ENCODE measurements at regions of chr13 and their contacts with region 1.

Region 1: GRCh38 chr13:41668130-41668757 is 210.9 kb downstream of the RGCC start:
- DNase-seq: peak; percentile 85
- H3K4me3 ChIP-seq: no peak overlapping the region
- H3K27ac ChIP-seq: no peak overlapping the region
- H3K27me3 ChIP-seq: no peaks in the 10 kb centered on the region
- CTCF ChIP-seq: peak; percentile 85

Region 2: DNA sequence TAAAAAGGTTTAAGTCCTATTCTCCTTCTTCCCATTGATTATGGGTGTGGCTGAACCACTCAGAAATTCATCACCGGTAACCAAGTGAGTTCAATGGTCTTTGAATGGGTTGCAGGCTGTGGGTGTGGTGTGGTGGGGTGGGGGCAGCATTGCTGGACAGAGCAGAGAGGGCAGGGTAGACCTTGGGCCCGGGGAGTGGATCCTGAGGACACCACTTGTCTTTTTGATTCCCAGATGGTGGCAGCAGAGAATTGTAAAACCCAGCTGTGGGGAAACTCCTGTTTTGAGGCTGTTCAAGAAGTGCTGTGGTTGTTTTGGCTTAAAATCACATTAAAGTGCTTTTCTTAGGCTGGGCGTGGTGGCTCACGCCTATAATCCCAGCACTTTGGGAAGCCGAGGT is 256.7 kb before region 1 on chr13:
- CTCF ChIA-PET with region 1: interaction called, 12 read pairs
- POLR2A ChIA-PET with region 1: no interaction called
- DNase-seq: peak; percentile 16
- H3K4me3 ChIP-seq: no peak overlapping the region
- H3K27ac ChIP-seq: no peak overlapping the region
- H3K27me3 ChIP-seq: no peaks in the 10 kb centered on the region
- CTCF ChIP-seq: peak; percentile 48

Region 3: DNA sequence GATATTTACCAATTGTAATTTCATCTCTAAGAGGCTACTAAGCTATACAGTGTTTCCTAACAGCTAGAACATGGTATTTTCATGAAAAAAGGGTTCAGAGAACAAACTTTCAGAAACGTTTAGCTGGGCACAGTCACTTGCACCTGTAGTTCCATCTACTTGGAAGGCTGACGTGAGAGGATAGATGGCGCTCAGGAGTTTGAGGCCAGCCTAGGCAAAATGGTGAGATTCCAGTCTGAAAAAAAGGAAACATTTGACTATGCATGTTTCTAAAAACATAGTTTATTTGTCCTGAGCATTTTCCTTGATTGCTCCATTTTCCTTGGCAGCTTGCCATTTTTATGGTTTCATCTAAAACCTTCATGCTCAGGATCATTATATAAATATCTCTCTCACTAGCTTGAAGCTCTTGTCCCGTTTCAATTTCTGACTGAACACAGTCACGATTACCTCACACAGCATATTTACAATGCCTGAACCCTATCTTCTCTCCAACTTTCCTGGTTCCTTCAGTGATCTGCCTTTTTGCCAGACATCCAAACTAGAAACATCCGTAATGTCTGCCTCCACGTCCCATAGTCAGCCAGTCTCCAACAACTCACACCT is 10.1 kb before region 1 on chr13:
- CTCF ChIA-PET with region 1: interaction called, 17 read pairs
- POLR2A ChIA-PET with region 1: no interaction called
- DNase-seq: peak; percentile 74
- H3K4me3 ChIP-seq: no peak overlapping the region
- H3K27ac ChIP-seq: peak overlapping the region; percentile 77
- H3K27me3 ChIP-seq: no peaks in the 10 kb centered on the region
- CTCF ChIP-seq: peak; percentile 30; the same call in 1 of the 2 replicates

Region 4: DNA sequence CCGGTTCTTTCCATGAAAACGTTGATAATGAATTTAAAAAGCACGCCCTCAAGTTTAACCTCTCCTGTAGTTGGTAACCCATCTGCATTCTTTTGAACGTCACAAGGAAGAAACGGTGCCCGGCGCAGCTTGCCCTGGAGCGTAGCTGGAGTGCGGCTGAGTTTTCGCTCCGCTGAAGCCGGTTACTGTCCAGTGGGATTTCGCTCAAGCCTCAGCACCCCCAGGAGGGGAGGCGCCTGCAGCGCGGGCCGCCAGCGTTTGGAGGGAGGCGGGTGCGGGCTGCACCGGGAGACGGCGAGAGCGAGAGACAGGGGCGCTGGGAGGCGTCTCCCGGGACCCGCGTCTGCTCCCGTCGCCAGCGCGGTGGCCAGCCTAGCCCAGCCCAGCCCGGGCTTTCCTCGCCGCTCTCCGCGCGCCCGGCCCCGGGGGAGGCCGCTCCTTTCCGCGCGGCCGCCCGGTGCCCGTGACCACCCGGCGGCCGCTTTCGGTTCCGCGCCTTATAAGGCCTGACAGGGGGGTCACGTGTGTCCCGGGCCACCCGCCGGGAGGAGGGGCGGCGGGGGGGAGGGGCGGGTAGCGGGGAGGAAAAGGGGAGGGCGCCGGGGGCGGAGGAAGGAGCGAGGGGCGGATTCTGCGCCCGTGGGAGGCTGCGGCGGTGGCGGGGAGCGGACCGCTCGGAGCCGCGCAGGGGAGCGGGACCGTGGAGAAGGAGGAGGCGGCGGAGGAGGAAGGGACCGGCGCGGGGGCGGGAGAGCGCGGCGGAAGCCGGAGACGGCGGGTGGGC is 371.9 kb after region 1 on chr13:
- CTCF ChIA-PET with region 1: interaction called, 29 read pairs
- POLR2A ChIA-PET with region 1: no interaction called
- DNase-seq: peak; percentile 69
- H3K4me3 ChIP-seq: peak overlapping the region; percentile 84
- H3K27ac ChIP-seq: peak overlapping the region; percentile 83
- H3K27me3 ChIP-seq: no peaks in the 10 kb centered on the region
- CTCF ChIP-seq: 0 out of 2 replicates have a peak, but pooled peaks have one; percentile 7

Region 5: DNA sequence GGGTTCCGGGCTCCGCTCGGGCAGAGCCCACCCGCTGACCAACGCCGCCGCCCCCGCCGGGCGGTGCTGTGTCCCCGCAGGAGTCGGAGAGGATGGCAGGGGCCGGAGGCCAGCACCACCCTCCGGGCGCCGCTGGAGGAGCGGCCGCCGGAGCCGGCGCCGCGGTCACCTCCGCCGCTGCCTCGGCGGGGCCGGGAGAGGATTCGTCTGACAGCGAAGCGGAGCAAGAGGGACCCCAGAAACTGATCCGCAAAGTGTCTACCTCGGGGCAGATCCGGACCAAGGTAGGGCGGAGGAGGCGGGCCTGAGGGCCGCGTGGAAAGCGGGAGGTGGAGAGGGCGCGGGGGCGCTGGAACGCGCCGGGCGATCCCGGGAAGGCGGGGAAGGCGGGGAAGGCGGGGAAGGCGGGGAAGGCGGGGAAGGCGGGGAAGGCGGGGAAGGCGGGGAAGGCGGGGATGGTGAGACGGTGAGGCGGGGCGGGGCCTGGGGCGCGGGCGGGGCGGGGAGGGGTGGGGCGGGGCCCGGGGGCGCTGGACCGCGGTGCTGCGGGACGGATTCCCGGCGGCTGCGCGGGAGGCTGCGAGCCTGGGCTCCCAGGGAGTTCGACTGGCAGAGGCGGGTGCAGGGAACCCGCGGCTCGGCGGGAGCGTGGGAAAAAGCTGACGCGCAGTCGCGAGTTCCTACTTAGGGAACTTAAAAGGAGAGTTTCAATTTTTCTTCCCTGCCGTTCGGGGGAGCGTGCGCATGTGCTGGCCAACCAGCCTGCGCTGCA is 380.6 kb after region 1 on chr13:
- CTCF ChIA-PET with region 1: interaction called, 11 read pairs
- POLR2A ChIA-PET with region 1: interaction called, 5 read pairs
- DNase-seq: no peak
- H3K4me3 ChIP-seq: peak overlapping the region; percentile 76
- H3K27ac ChIP-seq: peak overlapping the region; percentile 59
- H3K27me3 ChIP-seq: no peaks in the 10 kb centered on the region
- CTCF ChIP-seq: no peak

Region 6: DNA sequence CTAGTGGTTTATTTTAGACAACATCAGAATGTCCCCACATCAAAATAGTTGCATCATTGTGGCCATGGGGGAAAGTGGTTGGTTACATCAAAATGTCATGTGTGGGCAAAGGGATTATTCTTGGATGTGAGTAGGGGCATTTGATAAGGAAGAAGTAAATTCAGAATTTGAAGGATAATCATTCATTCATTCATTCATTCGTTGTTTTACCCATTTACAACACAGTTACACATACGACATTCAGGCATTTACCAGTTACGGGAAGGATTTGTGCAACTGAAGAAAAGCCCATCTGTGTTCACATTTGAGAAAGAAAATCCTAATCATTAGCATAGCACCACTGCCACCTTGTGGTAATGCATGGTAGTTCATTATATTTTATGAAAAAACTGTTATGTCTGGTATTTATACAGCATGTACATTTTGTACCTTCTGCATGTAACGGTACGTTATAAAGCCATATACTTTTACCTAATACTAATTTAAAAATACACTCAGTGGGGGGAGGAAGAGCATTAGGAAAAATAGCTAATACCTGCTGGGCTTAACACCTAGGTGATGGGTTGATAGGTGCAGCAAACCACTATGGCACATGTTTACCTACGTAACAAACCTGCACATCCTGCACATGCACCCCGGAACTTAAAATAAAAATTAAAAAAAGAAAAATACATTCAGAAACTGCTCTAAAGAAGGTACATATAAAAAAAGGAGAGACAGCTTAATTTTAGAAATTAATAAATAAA is 442.3 kb after region 1 on chr13:
- CTCF ChIA-PET with region 1: interaction called, 101 read pairs
- POLR2A ChIA-PET with region 1: no interaction called
- DNase-seq: peak; percentile 54
- H3K4me3 ChIP-seq: no peak overlapping the region
- H3K27ac ChIP-seq: no peak overlapping the region
- H3K27me3 ChIP-seq: no peaks in the 10 kb centered on the region
- CTCF ChIP-seq: peak; percentile 70

Region 7: GRCh38 chr13:42215578-42216421 is 547.6 kb after region 1 on chr13:
- CTCF ChIA-PET with region 1: interaction called, 20 read pairs
- POLR2A ChIA-PET with region 1: no interaction called
- DNase-seq: peak; percentile 15
- H3K4me3 ChIP-seq: no peak overlapping the region
- H3K27ac ChIP-seq: no peak overlapping the region
- H3K27me3 ChIP-seq: no peaks in the 10 kb centered on the region
- CTCF ChIP-seq: peak; percentile 77

Measured in AG04450 (cell line).